Endothelial cell of umbilical vein (primary cell): ENCODE measurements at regions of chr11 and their contacts with region 1.

Region 1: DNA sequence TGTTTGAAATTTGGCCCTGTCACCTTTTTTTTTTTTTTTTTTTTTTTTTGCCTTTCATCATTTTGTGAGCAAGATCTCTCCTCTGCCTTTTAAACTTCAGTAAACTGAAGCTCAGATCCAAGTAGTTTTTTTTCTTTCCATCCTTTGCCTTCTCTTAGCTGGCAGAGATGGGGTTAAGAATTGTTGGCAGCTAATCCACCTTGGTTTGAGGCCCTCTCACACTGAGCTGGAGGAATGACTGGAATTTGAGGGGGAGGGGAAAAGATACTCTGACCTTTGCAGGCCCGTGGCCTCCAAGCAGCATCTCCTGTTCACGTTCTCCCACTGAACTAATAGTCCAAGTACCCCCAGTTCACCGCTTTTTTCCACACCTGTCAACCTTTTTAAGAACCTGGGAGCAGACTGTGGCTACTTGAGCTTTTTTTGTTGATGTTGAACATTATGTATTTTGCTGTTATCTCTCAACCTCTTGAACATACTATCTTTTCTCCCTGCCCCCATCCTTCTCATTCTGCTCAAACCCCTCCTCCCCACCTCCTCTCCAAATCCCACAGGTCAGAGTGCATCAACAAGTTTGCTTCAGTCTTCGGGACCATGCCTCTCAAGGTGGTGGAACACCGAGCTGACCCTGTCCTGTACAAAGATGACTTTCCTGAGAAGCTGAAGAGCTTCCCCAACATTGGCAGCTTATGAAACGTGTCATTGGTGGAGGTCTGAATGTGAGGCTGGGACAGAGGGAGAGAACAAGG is 66.2 kb downstream of the ALX4 start:
- DNase-seq: peak; percentile 7
- H3K4me3 ChIP-seq: no peak overlapping the region
- H3K27ac ChIP-seq: peak overlapping the region; percentile 9
- H3K4me1 ChIP-seq: peaks cover 22% of the 10 kb centered on the region
- H3K27me3 ChIP-seq: no peaks in the 10 kb centered on the region
- CTCF ChIP-seq: no peak
- POLR2A ChIP-seq: no peak

Region 2: GRCh38 chr11:44269369-44270351 is 25.9 kb after region 1 on chr11:
- CTCF ChIA-PET with region 1: interaction called, 13 read pairs
- POLR2A ChIA-PET with region 1: no interaction called
- dilution Hi-C with region 1: no loop called
- intact Hi-C with region 1: no loop called
- DNase-seq: peak; percentile 79
- H3K4me3 ChIP-seq: peak overlapping the region in 1 of 3 experiments; percentile 30
- H3K27ac ChIP-seq: peak overlapping the region; percentile 87
- H3K4me1 ChIP-seq: peaks cover 20% of the 10 kb centered on the region
- H3K27me3 ChIP-seq: no peaks in the 10 kb centered on the region
- CTCF ChIP-seq: no peak
- POLR2A ChIP-seq: no peak

Region 3: GRCh38 chr11:44309483-44310205 is 65.9 kb after region 1 on chr11 and contains the start of gene ALX4:
- CTCF ChIA-PET with region 1: no interaction called
- POLR2A ChIA-PET with region 1: no interaction called
- dilution Hi-C with region 1: no loop called
- intact Hi-C with region 1: no loop called
- DNase-seq: no peak
- H3K4me3 ChIP-seq: no peak within 1 kb of the TSS
- H3K27ac ChIP-seq: no peak within 1 kb of the TSS
- H3K4me1 ChIP-seq: peaks cover 7% of the 10 kb centered on the region
- H3K27me3 ChIP-seq: peaks cover 95% of the 10 kb centered on the region in 2 experiments
- CTCF ChIP-seq: no peak
- POLR2A ChIP-seq: no peak
- total RNA-seq, gene ALX4: not detected in 2 replicates